ENCODE measurements at regions of chr4 and their contacts with region 1.

Region 1: DNA sequence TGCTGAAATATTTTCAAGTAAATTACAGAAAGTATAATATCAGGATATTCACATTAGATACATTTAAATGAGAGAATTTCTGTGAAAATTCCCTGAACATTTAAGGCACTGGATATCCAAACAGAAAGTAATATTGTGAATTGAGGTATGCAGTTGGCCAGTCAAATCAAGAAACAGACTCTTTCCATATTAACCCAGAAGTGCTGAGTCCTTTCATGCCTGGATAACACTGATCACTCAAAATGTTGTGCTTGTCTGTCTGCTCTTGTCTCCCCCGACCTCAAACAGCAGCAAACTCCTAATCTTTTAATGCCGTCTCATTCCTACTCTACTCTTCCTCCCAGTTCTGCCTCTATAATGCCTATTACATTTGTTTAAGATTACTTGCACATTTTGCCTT is 51.2 kb downstream of the TBC1D9 start:
- DNase-seq: no peak
- ATAC-seq: no peak
- H3K4me3 ChIP-seq: no peak overlapping the region
- H3K4me3 Mint-ChIP-seq: peak overlapping the region; percentile 0
- H3K27ac ChIP-seq: no peak overlapping the region
- H3K27ac Mint-ChIP-seq: peak overlapping the region; percentile 38
- H3K4me1 ChIP-seq: peaks cover 16 to 23% of the 10 kb centered on the region in 2 donors
- H3K4me1 Mint-ChIP-seq: peaks cover 65% of the 10 kb centered on the region
- H3K27me3 ChIP-seq: no peaks in the 10 kb centered on the region
- H3K27me3 Mint-ChIP-seq: no peaks in the 10 kb centered on the region
- CTCF ChIP-seq: no peak

Region 2: DNA sequence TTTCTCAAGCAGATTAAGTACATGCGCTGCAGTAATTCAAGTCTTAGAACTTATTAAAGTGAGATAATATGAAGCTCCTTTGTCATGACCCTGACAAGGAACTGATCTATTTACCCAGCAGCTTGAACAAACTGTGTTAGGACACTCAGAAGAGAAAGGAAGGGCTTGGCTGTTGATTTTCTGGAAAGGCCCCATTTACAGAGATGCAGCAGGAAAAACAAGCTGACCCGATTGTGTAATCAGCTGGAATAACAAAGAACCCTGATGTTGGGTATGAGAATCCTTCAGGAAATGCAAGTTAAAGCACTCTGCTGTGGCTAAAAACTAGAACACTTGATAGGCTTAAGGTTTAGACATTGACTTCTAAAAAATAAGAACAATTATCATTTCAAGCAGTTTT is 13.6 kb before region 1 on chr4:
- CTCF ChIA-PET with region 1: interaction called, 3 read pairs
- POLR2A ChIA-PET with region 1: interaction called, 4 read pairs
- intact Hi-C with region 1: loop called (anchors 2 kb)
- DNase-seq: no peak
- ATAC-seq: no peak
- H3K4me3 ChIP-seq: no peak overlapping the region
- H3K4me3 Mint-ChIP-seq: no peak overlapping the region
- H3K27ac ChIP-seq: peak overlapping the region in 1 of 2 donors; percentile 6
- H3K27ac Mint-ChIP-seq: peak overlapping the region; percentile 3
- H3K4me1 ChIP-seq: peaks cover 11 to 18% of the 10 kb centered on the region in 2 donors
- H3K4me1 Mint-ChIP-seq: peaks cover 55% of the 10 kb centered on the region
- H3K27me3 ChIP-seq: no peaks in the 10 kb centered on the region
- H3K27me3 Mint-ChIP-seq: no peaks in the 10 kb centered on the region
- CTCF ChIP-seq: no peak

Region 3: GRCh38 chr4:140720387-140721304 is 15.7 kb after region 1 on chr4:
- CTCF ChIA-PET with region 1: interaction called, 3 read pairs
- POLR2A ChIA-PET with region 1: interaction called, 8 read pairs
- intact Hi-C with region 1: loop called (anchors 2 kb)
- DNase-seq: peak; percentile 75
- ATAC-seq: peak; percentile 63
- H3K4me3 ChIP-seq: peak overlapping the region; percentile 40 to 68 (median 54)
- H3K4me3 Mint-ChIP-seq: peak overlapping the region; percentile 89
- H3K27ac ChIP-seq: peak overlapping the region; percentile 92
- H3K27ac Mint-ChIP-seq: peak overlapping the region; percentile 99
- H3K4me1 ChIP-seq: peaks cover 75 to 76% of the 10 kb centered on the region in 2 donors
- H3K4me1 Mint-ChIP-seq: peaks cover 85% of the 10 kb centered on the region
- H3K27me3 ChIP-seq: no peaks in the 10 kb centered on the region
- H3K27me3 Mint-ChIP-seq: no peaks in the 10 kb centered on the region
- CTCF ChIP-seq: no peak